ENCODE measurements at regions of chr3 and their contacts with region 1.

Region 1: DNA sequence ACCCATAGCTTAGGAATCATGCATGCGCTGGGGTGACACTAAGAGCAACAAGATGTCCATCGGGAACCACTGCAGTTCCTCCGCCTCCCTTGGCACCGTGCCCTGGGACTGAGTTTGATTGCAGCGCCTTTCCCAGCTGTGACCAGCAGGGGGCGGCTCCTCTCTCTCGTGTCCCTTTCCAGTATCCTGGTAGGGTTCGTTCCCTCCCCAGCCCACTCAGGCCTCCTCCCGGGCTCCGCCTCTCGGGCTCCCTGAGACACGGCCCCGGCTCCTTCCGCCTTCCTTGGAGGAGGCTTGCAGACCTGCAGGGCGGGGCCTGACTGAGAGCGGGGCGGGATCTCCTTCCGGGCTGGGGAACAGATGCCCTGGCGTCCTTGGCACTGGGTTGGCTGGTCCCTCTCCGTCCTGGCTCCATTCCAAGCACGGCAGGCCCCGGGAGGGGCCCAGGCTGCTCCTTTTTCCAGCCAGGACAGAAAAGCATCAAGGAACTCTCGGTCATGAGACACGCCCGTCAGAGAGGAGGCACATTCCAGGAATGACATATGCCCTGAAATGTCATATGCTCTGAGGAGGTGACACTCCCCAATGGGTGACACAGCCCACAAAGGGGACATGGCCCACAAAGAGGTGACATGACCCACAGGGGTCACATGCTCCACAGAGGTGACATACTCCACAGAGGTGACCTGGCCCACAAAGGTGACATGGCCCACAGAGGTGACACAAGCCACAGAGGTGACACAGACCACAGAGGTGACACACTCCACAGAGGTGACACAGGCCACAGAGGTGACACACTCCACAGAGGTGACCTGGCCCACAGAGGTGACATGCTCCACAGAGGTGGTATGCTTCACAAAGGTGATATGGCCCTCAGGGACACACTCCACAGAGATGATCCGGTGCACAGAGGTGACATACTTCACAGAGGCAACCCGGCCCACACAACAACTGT is 79.0 kb downstream of the ABHD5 start:
- DNase-seq: peak; percentile 98 to 100
- ATAC-seq: peak; percentile 95
- H3K4me3 ChIP-seq: no peak overlapping the region
- H3K27ac ChIP-seq: peak overlapping the region; percentile 82 to 85
- H3K4me1 ChIP-seq: no peaks in the 10 kb centered on the region
- H3K27me3 ChIP-seq: no peaks in the 10 kb centered on the region

Region 2: GRCh38 chr3:43621656-43622432 is 147.9 kb before region 1 on chr3 and contains the start of gene ANO10:
- intact Hi-C with region 1: loop called in 1 of 2 experiments (anchors 10 kb)
- DNase-seq: peak; percentile 99 to 100
- ATAC-seq: peak; percentile 100
- H3K4me3 ChIP-seq: peak within 1 kb of the TSS; percentile 75 to 76
- H3K27ac ChIP-seq: peak within 1 kb of the TSS; percentile 90 to 94
- H3K4me1 ChIP-seq: peaks cover 0 to 2% of the 10 kb centered on the region in 2 donors
- H3K27me3 ChIP-seq: no peaks in the 10 kb centered on the region
- total RNA-seq, gene ANO10: 42.6 to 46.8 TPM

Region 3: DNA sequence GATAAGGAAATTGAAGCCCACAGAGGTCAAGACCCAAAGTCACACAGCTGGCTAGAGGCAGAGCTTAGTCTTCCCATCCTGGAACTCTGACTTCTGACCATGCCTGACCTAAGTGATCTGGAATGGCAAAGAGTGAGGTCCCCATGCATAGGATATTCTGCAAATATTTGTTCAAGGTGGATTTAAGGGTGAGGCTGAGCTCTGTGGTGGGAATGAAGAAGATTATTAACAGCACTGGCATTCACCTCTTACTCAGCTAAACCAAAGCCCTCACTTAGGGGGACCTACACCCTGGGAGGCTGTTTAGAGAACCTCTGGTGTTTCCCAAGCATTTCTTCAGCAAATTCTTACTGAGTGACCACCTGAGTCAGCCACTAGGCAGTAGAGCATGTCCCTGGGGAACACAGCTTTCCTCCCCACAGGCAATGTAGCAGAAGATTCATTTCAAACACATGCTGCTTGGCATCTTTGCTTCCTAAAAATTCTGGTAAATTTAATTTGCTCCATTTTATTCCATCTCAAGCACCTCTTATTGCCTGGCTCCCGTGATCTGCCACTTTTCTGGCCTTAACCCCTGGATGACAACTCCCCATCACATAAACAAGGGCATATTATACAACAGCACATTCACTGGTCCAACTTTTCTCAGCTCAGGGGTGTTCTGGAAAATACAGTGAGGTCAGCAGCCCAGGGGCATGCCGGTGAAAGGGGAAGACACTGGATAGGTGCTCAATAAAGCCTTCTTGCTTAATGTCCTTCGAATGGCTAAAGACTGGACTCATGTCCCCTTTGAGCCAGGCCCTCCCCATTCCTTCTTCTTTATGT is 97.0 kb after region 1 on chr3:
- intact Hi-C with region 1: loop called (anchors 5 to 10 kb)
- DNase-seq: peak in 1 of 2 donors; percentile 21
- ATAC-seq: no peak
- H3K4me3 ChIP-seq: no peak overlapping the region
- H3K27ac ChIP-seq: no peak overlapping the region
- H3K4me1 ChIP-seq: peaks cover 3 to 5% of the 10 kb centered on the region in 2 donors
- H3K27me3 ChIP-seq: no peaks in the 10 kb centered on the region

Region 4: GRCh38 chr3:44065311-44066094 is 295.8 kb after region 1 on chr3:
- intact Hi-C with region 1: loop called in 1 of 2 experiments (anchors 10 kb)
- DNase-seq: no peak
- ATAC-seq: peak; percentile 71
- H3K4me3 ChIP-seq: no peak overlapping the region
- H3K27ac ChIP-seq: no peak overlapping the region
- H3K4me1 ChIP-seq: no peaks in the 10 kb centered on the region
- H3K27me3 ChIP-seq: no peaks in the 10 kb centered on the region

Measured in aorta (tissue), 5 donors.